Panc1 (cell line): ENCODE measurements at regions of chr19 and their contacts with region 1.

Region 1: DNA sequence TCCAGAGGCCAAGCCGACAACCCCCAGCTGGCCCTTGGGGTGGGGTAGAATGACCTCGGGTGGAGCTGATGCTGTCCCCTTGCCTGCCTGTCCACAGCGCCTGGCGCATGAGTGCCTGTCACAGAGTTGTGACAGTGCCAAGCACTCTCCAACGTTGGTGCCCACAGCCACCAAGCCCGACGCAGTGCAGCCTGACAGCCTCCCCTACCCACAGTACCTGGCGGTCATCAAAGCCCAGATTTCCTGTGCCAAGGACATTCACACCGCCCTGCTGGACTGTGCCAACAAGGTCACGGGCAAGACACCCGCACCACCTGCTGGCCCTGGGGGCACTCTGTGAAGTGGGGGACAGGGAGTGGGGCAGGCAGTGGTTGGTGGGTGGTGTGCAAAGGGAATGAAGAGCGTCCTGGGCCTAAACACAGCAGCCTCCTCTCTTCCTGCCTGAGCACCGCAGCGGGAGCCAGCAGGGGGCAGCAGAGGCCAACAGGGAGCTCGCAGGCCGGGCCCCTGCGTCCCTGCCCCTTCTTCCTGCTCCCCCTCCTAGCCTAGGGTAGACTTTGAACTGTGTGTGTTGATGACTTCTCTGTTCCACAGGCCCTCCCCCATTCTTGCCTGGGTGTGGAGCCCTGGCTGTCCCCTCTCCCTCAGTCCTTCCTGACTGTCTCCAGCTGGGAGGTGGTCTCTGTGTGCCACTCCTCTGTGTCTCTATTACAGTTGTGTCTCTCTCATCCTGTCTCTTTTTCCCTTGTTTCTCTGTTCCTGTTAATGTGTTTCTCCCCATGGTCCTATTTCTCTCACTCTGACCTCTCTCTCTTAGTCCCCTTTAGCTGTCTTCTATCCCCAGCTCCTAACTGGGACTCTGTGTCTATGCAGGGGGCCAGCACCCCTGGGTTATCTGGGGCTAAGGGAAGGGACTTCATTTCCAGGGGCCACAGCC is 6.5 kb downstream of the MED29 start:
- DNase-seq: peak; percentile 100
- ATAC-seq: peak; percentile 78
- H3K4me3 ChIP-seq: no peak overlapping the region
- H3K27ac ChIP-seq: peak overlapping the region; percentile 75
- H3K4me1 ChIP-seq: peaks cover 51% of the 10 kb centered on the region
- H3K27me3 ChIP-seq: no peaks in the 10 kb centered on the region
- CTCF ChIP-seq: no peak

Region 2: DNA sequence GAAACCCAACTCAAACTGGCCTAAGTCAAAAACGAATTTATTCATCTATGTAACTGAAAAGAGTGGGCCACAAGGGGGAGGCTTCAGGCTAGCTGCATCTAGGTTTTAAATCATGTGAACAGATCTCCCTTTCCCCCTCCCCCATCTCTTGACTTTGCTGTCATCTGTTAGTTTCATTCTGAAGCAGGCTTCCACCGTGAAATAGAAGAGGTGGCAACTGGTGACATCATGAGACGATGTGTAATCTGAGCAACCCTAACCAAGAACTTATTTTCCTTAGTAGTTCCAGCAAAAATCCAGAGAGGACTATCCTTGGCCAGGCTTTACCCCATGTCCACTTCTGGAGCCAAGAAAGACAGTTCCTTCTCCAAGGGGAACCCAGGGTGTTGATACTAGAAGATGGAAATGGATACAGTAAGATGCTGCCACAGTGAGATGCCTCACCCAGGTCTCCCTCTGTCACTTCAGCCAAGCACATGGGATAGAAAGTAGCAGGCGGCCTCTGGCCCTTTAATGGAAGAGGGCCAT is 46.0 kb before region 1 on chr19:
- CTCF ChIA-PET with region 1: interaction called, 10 read pairs
- POLR2A ChIA-PET with region 1: interaction called, 4 read pairs
- in situ Hi-C with region 1: loop called (anchors 5 kb)
- intact Hi-C with region 1: no loop called
- DNase-seq: no peak
- ATAC-seq: peak; percentile 6
- H3K4me3 ChIP-seq: no peak overlapping the region
- H3K27ac ChIP-seq: no peak overlapping the region
- H3K4me1 ChIP-seq: no peaks in the 10 kb centered on the region
- H3K27me3 ChIP-seq: no peaks in the 10 kb centered on the region
- CTCF ChIP-seq: no peak

Region 3: DNA sequence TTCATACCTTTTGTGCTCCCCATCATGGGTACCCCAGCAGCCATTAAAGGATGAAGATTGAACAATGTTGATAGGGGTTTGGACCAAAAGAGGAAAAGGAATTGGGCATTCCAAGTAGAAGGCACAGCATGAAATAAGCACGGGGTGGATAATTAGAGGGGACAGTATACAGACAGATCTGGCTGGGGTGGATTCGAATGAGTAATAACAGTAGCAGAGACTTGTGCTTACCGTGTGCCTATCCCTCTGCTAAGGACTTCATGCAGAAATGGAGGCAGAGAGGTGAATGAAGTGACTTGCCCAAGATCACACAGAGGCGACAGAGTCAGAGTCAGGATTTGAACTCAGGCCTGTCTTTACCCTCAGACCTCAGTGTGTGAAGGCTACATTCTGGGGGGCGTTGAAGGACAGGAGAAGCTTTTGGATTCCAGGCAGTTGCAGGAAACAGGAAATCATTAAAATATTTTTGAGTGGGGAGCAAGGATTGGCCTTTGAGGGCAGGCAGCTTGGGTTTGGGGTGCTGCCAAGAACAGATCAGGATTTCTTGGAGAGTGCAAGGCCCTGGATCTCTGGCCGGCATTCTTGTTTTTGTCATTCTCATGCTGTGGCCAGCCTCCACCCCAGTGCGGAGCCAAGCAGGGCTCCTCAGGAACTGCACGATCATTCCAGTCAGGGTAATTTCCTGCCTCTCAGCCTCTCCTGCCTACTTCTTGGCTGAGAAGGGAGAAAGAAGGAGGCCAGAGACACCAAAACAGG is 25.4 kb before region 1 on chr19:
- CTCF ChIA-PET with region 1: interaction called, 13 read pairs
- POLR2A ChIA-PET with region 1: interaction called, 6 read pairs
- in situ Hi-C with region 1: no loop called
- intact Hi-C with region 1: no loop called
- DNase-seq: no peak
- ATAC-seq: peak; percentile 2
- H3K4me3 ChIP-seq: no peak overlapping the region
- H3K27ac ChIP-seq: no peak overlapping the region
- H3K4me1 ChIP-seq: no peaks in the 10 kb centered on the region
- H3K27me3 ChIP-seq: no peaks in the 10 kb centered on the region
- CTCF ChIP-seq: no peak

Region 4: DNA sequence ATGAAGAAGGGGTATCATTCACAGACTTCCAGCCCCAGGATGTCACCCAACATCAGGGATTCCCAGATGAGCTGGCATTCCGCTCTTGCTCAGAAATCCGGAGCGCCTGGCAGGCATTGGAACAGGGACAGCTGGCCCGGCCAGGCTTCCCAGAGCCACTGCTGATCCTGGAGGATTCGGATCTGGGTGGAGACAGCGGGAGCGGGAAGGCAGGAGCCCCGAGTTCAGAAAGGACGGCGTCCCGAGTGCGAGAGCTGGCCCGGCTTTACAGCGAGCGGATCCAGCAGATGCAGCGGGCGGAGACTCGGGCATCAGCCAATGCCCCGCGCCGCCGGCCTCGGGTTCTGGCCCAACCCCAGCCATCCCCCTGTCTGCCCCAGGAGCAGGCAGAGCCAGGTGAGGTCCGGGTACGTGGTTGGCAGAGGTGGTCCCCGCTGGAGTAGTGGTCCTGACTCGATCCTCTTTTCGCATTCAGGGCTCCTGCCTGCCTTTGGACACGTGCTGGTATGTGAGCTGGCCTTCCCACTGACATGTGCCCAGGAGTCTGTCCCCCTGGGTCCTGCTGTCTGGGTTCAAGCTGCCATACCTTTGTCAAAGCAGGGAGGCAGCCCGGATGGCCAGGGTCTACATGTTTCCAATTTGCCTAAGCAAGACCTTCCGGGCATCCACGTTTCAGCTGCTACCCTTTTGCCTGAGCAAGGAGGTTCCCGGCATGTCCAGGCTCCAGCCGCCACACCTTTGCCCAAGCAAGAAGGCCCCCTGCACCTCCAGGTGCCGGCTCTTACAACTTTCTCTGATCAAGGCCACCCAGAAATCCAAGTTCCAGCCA is 25.8 kb after region 1 on chr19:
- CTCF ChIA-PET with region 1: interaction called, 50 read pairs
- POLR2A ChIA-PET with region 1: interaction called, 32 read pairs
- in situ Hi-C with region 1: loop called (anchors 5 kb)
- intact Hi-C with region 1: no loop called
- DNase-seq: no peak
- ATAC-seq: no peak
- H3K4me3 ChIP-seq: no peak overlapping the region
- H3K27ac ChIP-seq: peak overlapping the region; percentile 3
- H3K4me1 ChIP-seq: peaks cover 24% of the 10 kb centered on the region
- H3K27me3 ChIP-seq: no peaks in the 10 kb centered on the region
- CTCF ChIP-seq: no peak

Region 5: DNA sequence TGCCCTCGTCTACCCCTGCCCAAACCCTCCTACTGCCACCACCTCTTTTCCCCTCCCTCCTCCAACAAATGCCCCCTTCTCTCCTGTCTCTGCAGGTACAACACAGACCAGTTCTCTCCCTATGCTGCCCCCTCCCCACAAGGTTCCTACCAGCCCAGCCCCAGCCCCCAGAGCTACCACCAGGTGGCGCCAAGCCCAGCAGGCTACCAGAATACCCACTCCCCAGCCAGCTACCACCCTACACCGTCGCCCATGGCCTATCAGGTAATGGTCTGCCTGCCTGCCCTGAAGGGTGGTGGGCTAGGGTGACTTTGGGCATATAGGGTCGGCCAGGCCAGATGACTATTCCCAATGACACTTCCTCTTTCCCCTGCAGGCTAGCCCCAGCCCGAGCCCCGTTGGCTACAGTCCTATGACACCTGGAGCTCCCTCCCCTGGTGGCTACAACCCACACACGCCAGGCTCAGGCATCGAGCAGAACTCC is 76.6 kb after region 1 on chr19:
- CTCF ChIA-PET with region 1: interaction called, 11 read pairs
- POLR2A ChIA-PET with region 1: no interaction called
- in situ Hi-C with region 1: no loop called
- intact Hi-C with region 1: no loop called
- DNase-seq: no peak
- ATAC-seq: peak; percentile 75
- H3K4me3 ChIP-seq: no peak overlapping the region
- H3K27ac ChIP-seq: no peak overlapping the region
- H3K4me1 ChIP-seq: no peaks in the 10 kb centered on the region
- H3K27me3 ChIP-seq: no peaks in the 10 kb centered on the region
- CTCF ChIP-seq: no peak